Sigmoid colon (tissue), 7 donors: ENCODE measurements at regions of chr11 and their contacts with region 1.

Region 1: GRCh38 chr11:65575568-65576231 is at the start of gene EHBP1L1:
- DNase-seq: peak; percentile 88
- H3K4me3 ChIP-seq: peak within 1 kb of the TSS; percentile 68 to 99 (median 87)
- H3K27ac ChIP-seq: peak within 1 kb of the TSS; percentile 91 to 98 (median 98)
- H3K4me1 ChIP-seq: peaks cover 0 to 81% (median 68%) of the 10 kb centered on the region in 4 donors
- H3K27me3 ChIP-seq: no peaks in the 10 kb centered on the region
- CTCF ChIP-seq: no peak
- EP300 ChIP-seq: no peak
- POLR2A ChIP-seq: no peak
- total RNA-seq, gene EHBP1L1: 148 to 366 (median 194) TPM

Region 2: DNA sequence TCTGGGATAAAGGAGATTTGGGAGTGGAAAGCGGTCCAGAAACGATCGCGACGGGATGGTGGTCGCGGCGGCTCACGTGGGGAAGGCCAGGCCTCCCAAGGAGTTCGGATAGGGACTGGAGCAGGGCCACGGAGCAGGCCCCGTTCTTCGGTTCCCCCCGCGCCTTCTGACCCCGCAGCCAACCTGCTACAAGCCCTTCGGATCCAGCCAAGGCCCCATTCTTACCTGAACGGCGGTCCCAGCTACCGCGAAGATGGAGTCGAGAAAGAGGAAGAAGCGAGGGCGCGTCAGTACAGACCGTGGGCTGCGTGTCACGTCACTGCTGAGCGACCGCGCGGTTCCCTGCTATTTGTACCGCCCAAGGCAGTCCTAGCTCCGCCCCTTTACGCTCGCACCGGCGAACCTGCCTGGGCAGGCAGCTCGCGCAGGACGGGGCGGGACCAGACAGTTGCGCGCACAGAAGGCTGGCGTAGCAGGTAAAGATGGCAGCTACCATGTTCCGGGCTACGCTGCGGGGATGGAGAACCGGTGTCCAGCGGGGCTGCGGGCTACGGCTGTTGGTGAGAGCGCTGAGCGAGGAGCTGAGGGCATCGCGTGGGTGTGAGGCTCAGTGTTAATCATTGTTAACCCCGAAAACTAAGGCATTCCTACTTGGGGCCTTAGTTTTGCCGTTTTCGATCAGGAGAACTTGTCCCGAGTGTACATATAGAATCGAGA is 453.7 kb before region 1 on chr11 and contains the starts of genes FAU and MRPL49:
- intact Hi-C with region 1: no loop called
- DNase-seq: peak; percentile 99
- H3K4me3 ChIP-seq: peak within 1 kb of the TSS; percentile 55 to 80 (median 70)
- H3K27ac ChIP-seq: peak within 1 kb of the TSS; percentile 81 to 97 (median 91)
- H3K4me1 ChIP-seq: peaks cover 0 to 36% (median 22%) of the 10 kb centered on the region in 4 donors
- H3K27me3 ChIP-seq: no peaks in the 10 kb centered on the region
- CTCF ChIP-seq: no peak
- EP300 ChIP-seq: no peak
- POLR2A ChIP-seq: peak; percentile 80 to 89
- total RNA-seq, gene FAU: 1,235 to 1,561 (median 1,347) TPM
- total RNA-seq, gene MRPL49: 41.5 to 104 (median 72.4) TPM

Region 3: DNA sequence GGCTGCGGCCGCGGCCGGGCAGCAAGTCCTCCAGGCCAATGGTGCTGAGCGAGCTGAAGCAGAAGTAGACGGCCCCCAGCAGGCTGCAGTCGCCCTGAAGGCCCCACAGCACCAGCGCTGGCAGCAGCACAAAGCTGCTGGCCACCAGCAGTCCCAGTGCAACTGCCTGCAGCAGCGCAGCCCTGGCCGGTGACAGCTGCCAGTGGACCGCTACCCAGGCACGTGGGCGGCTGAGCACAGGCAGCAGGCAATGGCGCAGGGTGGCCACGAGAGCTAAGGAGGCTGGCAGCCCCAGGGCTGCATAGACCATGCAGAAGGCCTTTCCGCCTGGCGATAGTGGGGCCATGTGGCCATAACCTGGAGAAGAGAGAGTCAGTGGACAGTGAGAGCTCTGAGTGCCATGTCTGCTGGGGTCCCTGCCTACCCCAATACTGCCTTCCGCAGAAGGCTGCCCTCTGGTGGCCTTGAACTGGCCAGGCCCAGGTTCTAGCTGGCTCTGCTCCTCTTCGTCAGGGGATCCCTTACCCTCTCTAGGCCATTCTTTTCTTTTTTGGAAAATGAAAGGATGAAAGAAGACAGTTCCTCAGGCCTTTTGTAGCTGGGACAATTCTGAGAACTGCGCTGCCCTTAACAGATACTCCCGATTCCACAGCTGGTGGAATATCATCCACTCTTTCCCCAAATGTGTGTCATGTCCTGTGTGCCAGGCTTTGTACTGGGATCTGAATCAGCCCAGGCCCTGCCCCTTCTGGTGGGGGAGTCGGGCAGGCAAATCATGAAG is 18.0 kb after region 1 on chr11:
- intact Hi-C with region 1: loop called (anchors 2 kb)
- DNase-seq: peak; percentile 75
- H3K4me3 ChIP-seq: no peak overlapping the region
- H3K27ac ChIP-seq: peak overlapping the region; percentile 32 to 81 (median 53)
- H3K4me1 ChIP-seq: peaks cover 0 to 39% (median 32%) of the 10 kb centered on the region in 4 donors
- H3K27me3 ChIP-seq: no peaks in the 10 kb centered on the region
- CTCF ChIP-seq: peak; percentile 76 to 93 (median 80)
- EP300 ChIP-seq: no peak
- POLR2A ChIP-seq: no peak